Panc1 (cell line): ENCODE measurements at regions of chr3 and their contacts with region 1.

Region 1: GRCh38 chr3:137709011-137709601 is 55.0 kb upstream of the SOX14 start:
- DNase-seq: no peak
- ATAC-seq: no peak
- H3K4me3 ChIP-seq: no peak overlapping the region
- H3K27ac ChIP-seq: no peak overlapping the region
- H3K4me1 ChIP-seq: no peaks in the 10 kb centered on the region
- H3K27me3 ChIP-seq: no peaks in the 10 kb centered on the region
- CTCF ChIP-seq: peak; percentile 61

Region 2: GRCh38 chr3:137796993-137797392 is 87.9 kb after region 1 on chr3:
- CTCF ChIA-PET with region 1: no interaction called
- POLR2A ChIA-PET with region 1: no interaction called
- in situ Hi-C with region 1: no loop called
- intact Hi-C with region 1: no loop called
- DNase-seq: no peak
- ATAC-seq: no peak
- H3K4me3 ChIP-seq: no peak overlapping the region
- H3K27ac ChIP-seq: no peak overlapping the region
- H3K4me1 ChIP-seq: no peaks in the 10 kb centered on the region
- H3K27me3 ChIP-seq: peaks cover 13% of the 10 kb centered on the region
- CTCF ChIP-seq: no peak

Region 3: GRCh38 chr3:137946345-137946973 is 237.4 kb after region 1 on chr3:
- CTCF ChIA-PET with region 1: interaction called, 3 read pairs
- POLR2A ChIA-PET with region 1: no interaction called
- in situ Hi-C with region 1: no loop called
- intact Hi-C with region 1: loop called (anchors 5 kb)
- DNase-seq: no peak
- ATAC-seq: peak; percentile 83
- H3K4me3 ChIP-seq: no peak overlapping the region
- H3K27ac ChIP-seq: no peak overlapping the region
- H3K4me1 ChIP-seq: no peaks in the 10 kb centered on the region
- H3K27me3 ChIP-seq: no peaks in the 10 kb centered on the region; the same call in 1 of the 2 replicates
- CTCF ChIP-seq: peak; percentile 91

Region 4: GRCh38 chr3:138935848-138936740 is 1227.0 kb after region 1 on chr3:
- CTCF ChIA-PET with region 1: no interaction called
- POLR2A ChIA-PET with region 1: no interaction called
- in situ Hi-C with region 1: no loop called
- intact Hi-C with region 1: no loop called
- DNase-seq: no peak
- ATAC-seq: peak; percentile 88
- H3K4me3 ChIP-seq: peak overlapping the region; percentile 45 to 57
- H3K27ac ChIP-seq: peak overlapping the region; percentile 75
- H3K4me1 ChIP-seq: peaks cover 14% of the 10 kb centered on the region
- H3K27me3 ChIP-seq: no peaks in the 10 kb centered on the region
- CTCF ChIP-seq: peak; percentile 98